Breast epithelium (tissue), 4 donors: ENCODE measurements at regions of chr3 and their contacts with region 1.

Region 1: DNA sequence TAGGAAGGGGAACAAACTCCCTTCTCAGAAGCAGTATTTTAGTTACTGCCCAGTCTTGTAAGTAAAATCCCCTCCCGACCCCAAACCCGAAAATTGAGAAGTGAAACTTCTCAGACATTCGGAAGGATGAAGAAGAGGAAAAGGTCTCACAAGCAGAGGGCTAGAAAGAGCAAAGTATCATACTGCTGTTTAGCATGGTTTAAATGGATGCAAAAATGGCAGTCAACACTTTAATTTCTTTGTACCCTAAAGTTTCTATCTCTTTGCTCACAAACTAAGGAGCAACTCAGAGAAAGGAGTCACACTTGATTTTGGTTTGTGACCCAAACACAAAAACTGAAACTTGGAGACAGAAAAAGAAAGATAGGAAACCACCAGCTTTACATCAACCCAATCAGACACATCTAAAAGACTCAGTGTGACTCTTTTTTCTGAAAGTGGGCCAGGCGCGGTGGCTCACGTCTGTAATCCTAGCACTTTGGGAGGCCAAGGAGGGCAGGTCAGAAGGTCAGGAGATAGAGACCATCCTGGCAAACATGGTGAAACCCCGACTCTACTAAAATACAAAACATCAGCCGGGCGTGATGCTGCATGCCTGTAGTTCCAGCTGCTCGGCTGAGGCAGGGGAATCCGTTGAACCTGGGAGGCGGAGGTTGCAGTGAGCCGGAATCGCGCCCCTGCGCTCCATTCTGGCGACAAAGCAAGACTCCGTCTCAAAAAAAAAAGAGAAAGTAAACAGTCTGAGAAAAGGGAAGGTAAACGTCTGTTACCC is 63.2 kb upstream of the ATP11B start:
- DNase-seq: no peak
- H3K4me3 ChIP-seq: no peak overlapping the region
- H3K27ac ChIP-seq: no peak overlapping the region
- H3K4me1 ChIP-seq: no peaks in the 10 kb centered on the region
- H3K27me3 ChIP-seq: no peaks in the 10 kb centered on the region
- CTCF ChIP-seq: no peak
- POLR2A ChIP-seq: no peak

Region 2: GRCh38 chr3:182692021-182692420 is 38.1 kb before region 1 on chr3:
- intact Hi-C with region 1: no loop called
- DNase-seq: no peak
- H3K4me3 ChIP-seq: no peak overlapping the region
- H3K27ac ChIP-seq: no peak overlapping the region
- H3K4me1 ChIP-seq: no peaks in the 10 kb centered on the region
- H3K27me3 ChIP-seq: no peaks in the 10 kb centered on the region
- CTCF ChIP-seq: no peak
- POLR2A ChIP-seq: no peak

Region 3: GRCh38 chr3:182787302-182788036 is 57.4 kb after region 1 on chr3:
- intact Hi-C with region 1: loop called (anchors 2 kb)
- DNase-seq: no peak
- H3K4me3 ChIP-seq: no peak overlapping the region
- H3K27ac ChIP-seq: no peak overlapping the region
- H3K4me1 ChIP-seq: no peaks in the 10 kb centered on the region
- H3K27me3 ChIP-seq: peaks cover 0 to 4% of the 10 kb centered on the region in 2 donors
- CTCF ChIP-seq: no peak
- POLR2A ChIP-seq: no peak